ENCODE measurements at regions of chr1 and their contacts with region 1.

Region 1: DNA sequence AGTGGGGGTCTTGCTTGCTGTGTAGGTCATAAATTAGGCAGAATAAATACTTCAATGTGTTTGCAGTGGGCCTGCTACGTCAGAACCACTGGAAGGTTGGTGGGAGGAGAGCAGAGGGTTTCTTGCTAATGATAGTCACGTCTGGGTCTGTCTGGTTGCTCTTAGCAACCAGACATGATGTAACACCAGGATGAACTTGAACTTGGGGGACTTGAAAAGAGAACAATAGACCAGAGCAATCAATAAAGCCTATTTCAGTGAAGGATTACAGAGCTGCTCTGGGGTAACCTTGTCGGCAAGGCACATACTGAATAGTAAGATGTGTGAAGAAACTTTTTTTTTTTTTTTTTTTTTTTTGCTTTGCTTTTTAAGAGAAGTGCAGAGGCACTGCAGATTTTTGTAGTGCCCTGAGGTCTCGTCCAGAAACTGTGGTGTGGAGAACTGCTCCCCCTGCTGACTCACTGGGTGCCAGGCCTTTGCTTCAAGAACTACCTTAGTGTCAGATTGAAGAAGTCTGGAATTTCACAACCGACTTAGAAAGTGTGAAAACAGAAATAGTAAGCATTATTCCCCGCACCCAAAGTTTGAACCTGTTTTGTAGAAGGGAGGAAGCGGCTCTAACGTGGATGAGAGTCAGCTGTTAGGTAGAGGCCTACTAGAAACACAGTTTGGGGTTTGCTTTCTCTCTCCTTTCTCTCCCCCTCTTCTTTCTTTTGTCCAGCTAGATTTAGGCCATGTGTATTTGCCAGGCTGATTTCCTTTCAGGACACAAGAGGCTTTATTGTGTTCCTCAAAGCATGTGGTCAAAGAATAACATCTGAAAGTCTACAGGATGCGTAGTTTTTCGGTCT is 271.6 kb downstream of the TM2D1 start:
- DNase-seq: peak; percentile 82 to 87
- H3K4me3 ChIP-seq: no peak overlapping the region
- H3K27ac ChIP-seq: peak overlapping the region; percentile 17; the same call in 1 of the 2 replicates
- H3K4me1 ChIP-seq: peaks cover 22% of the 10 kb centered on the region
- H3K27me3 ChIP-seq: no peaks in the 10 kb centered on the region
- CTCF ChIP-seq: peak; percentile 79

Region 2: GRCh38 chr1:59971464-59971911 is 1481.8 kb before region 1 on chr1:
- CTCF ChIA-PET with region 1: no interaction called
- POLR2A ChIA-PET with region 1: no interaction called
- intact Hi-C with region 1: loop called (anchors 5 kb)
- DNase-seq: peak; percentile 50 to 74
- H3K4me3 ChIP-seq: no peak overlapping the region
- H3K27ac ChIP-seq: no peak overlapping the region
- H3K4me1 ChIP-seq: no peaks in the 10 kb centered on the region
- H3K27me3 ChIP-seq: 0 out of 2 replicates have a peak, but pooled peaks cover 4% of the 10 kb centered on the region
- CTCF ChIP-seq: peak; percentile 94

Region 3: GRCh38 chr1:60978421-60979357 is 474.6 kb before region 1 on chr1:
- CTCF ChIA-PET with region 1: no interaction called
- POLR2A ChIA-PET with region 1: no interaction called
- intact Hi-C with region 1: loop called (anchors 10 kb)
- DNase-seq: peak in 1 of 2 experiments; percentile 26
- H3K4me3 ChIP-seq: no peak overlapping the region
- H3K27ac ChIP-seq: no peak overlapping the region
- H3K4me1 ChIP-seq: no peaks in the 10 kb centered on the region
- H3K27me3 ChIP-seq: no peaks in the 10 kb centered on the region
- CTCF ChIP-seq: peak; percentile 56

Region 4: GRCh38 chr1:61077676-61078541 is 375.4 kb before region 1 on chr1:
- CTCF ChIA-PET with region 1: no interaction called
- POLR2A ChIA-PET with region 1: interaction called, 4 read pairs
- intact Hi-C with region 1: loop called (anchors 1 kb)
- DNase-seq: peak; percentile 92 to 99
- H3K4me3 ChIP-seq: peak overlapping the region; percentile 68
- H3K27ac ChIP-seq: peak overlapping the region; percentile 67
- H3K4me1 ChIP-seq: peaks cover 51% of the 10 kb centered on the region
- H3K27me3 ChIP-seq: no peaks in the 10 kb centered on the region
- CTCF ChIP-seq: no peak

Region 5: GRCh38 chr1:61322769-61323168 is 130.6 kb before region 1 on chr1:
- CTCF ChIA-PET with region 1: interaction called, 10 read pairs
- POLR2A ChIA-PET with region 1: no interaction called
- intact Hi-C with region 1: no loop called
- DNase-seq: peak in 1 of 2 experiments; percentile 94
- H3K4me3 ChIP-seq: no peak overlapping the region
- H3K27ac ChIP-seq: peak overlapping the region; percentile 50
- H3K4me1 ChIP-seq: peaks cover 35% of the 10 kb centered on the region
- H3K27me3 ChIP-seq: no peaks in the 10 kb centered on the region
- CTCF ChIP-seq: no peak

Region 6: GRCh38 chr1:61588736-61589672 is 135.7 kb after region 1 on chr1:
- CTCF ChIA-PET with region 1: no interaction called
- POLR2A ChIA-PET with region 1: no interaction called
- intact Hi-C with region 1: loop called (anchors 10 kb)
- DNase-seq: peak; percentile 53 to 69
- H3K4me3 ChIP-seq: no peak overlapping the region
- H3K27ac ChIP-seq: no peak overlapping the region
- H3K4me1 ChIP-seq: no peaks in the 10 kb centered on the region
- H3K27me3 ChIP-seq: no peaks in the 10 kb centered on the region
- CTCF ChIP-seq: peak; percentile 90

Region 7: GRCh38 chr1:61674221-61674620 is 220.9 kb after region 1 on chr1:
- CTCF ChIA-PET with region 1: no interaction called
- POLR2A ChIA-PET with region 1: no interaction called
- intact Hi-C with region 1: no loop called
- DNase-seq: no peak
- H3K4me3 ChIP-seq: no peak overlapping the region
- H3K27ac ChIP-seq: 0 out of 2 replicates have a peak overlapping the region, but pooled peaks have one; percentile 16
- H3K4me1 ChIP-seq: no peaks in the 10 kb centered on the region
- H3K27me3 ChIP-seq: no peaks in the 10 kb centered on the region
- CTCF ChIP-seq: no peak